Motor neuron (in vitro differentiated cells): ENCODE measurements at regions of chr5 and their contacts with region 1.

Region 1: DNA sequence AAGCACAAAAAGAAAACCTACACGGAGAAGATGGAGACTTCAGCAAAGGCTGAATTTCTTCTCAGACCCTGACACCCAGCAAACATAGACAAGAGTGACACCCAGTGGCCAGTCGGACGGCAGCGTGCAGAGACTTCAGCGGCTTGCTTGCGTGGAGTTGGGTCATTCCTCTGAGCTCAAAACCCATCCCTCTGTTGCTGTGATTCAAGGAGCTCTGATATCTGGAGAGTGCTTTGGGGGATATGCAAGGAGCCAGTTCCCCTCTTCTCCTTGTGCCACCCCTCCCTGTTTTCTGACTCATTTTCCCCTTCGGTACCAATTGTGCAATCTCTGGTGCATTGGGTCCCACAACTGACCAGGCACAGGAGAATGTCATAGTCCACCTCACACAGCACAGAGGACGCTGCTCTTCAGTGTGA is 27.5 kb downstream of the SH3TC2 start:
- ATAC-seq: peak; percentile 61 to 99 (median 81)
- H3K4me3 ChIP-seq: no peak overlapping the region
- H3K27ac ChIP-seq: no peak overlapping the region
- H3K4me1 ChIP-seq: no peaks in the 10 kb centered on the region

Region 2: GRCh38 chr5:148042881-148043280 is 992.5 kb before region 1 on chr5:
- in situ Hi-C with region 1: no loop called
- ATAC-seq: peak in 2 of 8 experiments; percentile 40 to 54
- H3K4me3 ChIP-seq: no peak overlapping the region
- H3K27ac ChIP-seq: no peak overlapping the region
- H3K4me1 ChIP-seq: no peaks in the 10 kb centered on the region

Region 3: GRCh38 chr5:148443998-148444397 is 591.4 kb before region 1 on chr5:
- in situ Hi-C with region 1: loop called in 1 of 9 experiments (anchors 25 kb)
- ATAC-seq: peak; percentile 55 to 84 (median 74)
- H3K4me3 ChIP-seq: no peak overlapping the region
- H3K27ac ChIP-seq: no peak overlapping the region
- H3K4me1 ChIP-seq: no peaks in the 10 kb centered on the region

Region 4: GRCh38 chr5:149228618-149229297 is 193.4 kb after region 1 on chr5:
- in situ Hi-C with region 1: no loop called
- ATAC-seq: peak in 4 of 8 experiments; percentile 48 to 100 (median 100)
- H3K4me3 ChIP-seq: no peak overlapping the region
- H3K27ac ChIP-seq: no peak overlapping the region
- H3K4me1 ChIP-seq: no peaks in the 10 kb centered on the region